ENCODE measurements at regions of chr1 and their contacts with region 1.

Region 1: DNA sequence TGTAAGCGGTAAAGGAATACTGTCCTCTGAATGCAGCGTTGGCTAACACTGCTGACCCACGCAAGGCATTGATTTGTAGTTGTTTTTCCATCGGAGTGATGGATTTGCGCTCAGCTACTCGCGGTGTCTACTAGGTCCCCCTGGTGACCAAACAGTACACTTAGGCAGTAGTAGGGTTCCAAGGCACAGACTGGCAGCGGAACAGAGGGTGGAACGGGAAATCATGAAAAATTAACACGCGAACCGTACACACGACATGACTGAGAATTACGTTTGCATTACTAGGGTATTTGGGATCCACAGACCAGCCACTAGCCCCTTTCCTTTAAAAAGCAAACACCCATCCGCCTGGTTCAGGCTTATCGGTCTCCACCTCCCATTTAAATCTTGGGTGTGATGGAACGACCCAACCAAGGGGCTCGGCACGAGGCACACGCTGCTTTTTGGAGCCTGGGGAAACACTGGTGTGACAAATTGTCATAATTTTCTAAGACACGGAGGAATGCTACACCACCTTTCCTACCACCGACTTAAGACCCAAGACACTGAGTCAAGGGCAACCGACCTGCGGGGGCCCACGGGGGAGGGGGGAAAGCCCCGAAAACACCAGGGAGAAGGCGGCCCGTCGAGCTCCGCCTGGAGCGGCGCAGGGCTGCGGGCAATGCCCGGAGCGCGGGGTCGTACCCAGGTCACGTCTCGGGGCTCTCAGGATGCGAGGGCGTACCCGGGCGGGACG is 699 bp downstream of the DIPK1A start:
- DNase-seq: peak; percentile 61 to 83
- H3K4me3 ChIP-seq: peak overlapping the region; percentile 66
- H3K27ac ChIP-seq: peak overlapping the region; percentile 65
- H3K4me1 ChIP-seq: peaks cover 22% of the 10 kb centered on the region
- H3K27me3 ChIP-seq: no peaks in the 10 kb centered on the region
- CTCF ChIP-seq: peak; percentile 81

Region 2: DNA sequence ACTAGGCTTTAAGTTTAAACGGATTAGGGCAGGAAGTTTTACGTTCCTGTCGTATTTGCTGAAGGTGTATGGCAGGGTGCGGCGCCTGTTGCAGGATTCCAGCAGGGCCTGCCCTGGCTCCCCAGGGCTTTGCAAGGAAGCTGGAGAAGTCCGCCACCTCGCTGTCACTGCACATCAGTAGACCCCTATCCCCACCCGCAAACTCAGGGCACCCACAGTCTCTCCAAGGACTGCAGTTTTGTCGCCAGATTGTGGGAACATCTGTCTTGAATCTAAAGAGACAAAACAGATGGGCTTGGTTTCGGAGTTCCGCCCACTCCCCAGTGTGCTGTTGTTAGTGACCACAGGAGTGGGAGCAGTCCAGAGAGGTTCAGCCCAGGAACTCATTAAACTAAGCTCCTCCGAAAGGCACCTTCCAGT is 1349.1 kb before region 1 on chr1:
- CTCF ChIA-PET with region 1: no interaction called
- POLR2A ChIA-PET with region 1: interaction called, 23 read pairs
- intact Hi-C with region 1: no loop called
- DNase-seq: no peak
- H3K4me3 ChIP-seq: no peak overlapping the region
- H3K27ac ChIP-seq: no peak overlapping the region
- H3K4me1 ChIP-seq: peaks cover 37% of the 10 kb centered on the region
- H3K27me3 ChIP-seq: no peaks in the 10 kb centered on the region
- CTCF ChIP-seq: no peak

Region 3: GRCh38 chr1:91781371-91781825 is 1179.2 kb before region 1 on chr1:
- CTCF ChIA-PET with region 1: no interaction called
- POLR2A ChIA-PET with region 1: no interaction called
- intact Hi-C with region 1: no loop called
- DNase-seq: no peak
- H3K4me3 ChIP-seq: no peak overlapping the region
- H3K27ac ChIP-seq: no peak overlapping the region
- H3K4me1 ChIP-seq: no peaks in the 10 kb centered on the region; the same call in 1 of the 2 replicates
- H3K27me3 ChIP-seq: no peaks in the 10 kb centered on the region
- CTCF ChIP-seq: no peak

Region 4: DNA sequence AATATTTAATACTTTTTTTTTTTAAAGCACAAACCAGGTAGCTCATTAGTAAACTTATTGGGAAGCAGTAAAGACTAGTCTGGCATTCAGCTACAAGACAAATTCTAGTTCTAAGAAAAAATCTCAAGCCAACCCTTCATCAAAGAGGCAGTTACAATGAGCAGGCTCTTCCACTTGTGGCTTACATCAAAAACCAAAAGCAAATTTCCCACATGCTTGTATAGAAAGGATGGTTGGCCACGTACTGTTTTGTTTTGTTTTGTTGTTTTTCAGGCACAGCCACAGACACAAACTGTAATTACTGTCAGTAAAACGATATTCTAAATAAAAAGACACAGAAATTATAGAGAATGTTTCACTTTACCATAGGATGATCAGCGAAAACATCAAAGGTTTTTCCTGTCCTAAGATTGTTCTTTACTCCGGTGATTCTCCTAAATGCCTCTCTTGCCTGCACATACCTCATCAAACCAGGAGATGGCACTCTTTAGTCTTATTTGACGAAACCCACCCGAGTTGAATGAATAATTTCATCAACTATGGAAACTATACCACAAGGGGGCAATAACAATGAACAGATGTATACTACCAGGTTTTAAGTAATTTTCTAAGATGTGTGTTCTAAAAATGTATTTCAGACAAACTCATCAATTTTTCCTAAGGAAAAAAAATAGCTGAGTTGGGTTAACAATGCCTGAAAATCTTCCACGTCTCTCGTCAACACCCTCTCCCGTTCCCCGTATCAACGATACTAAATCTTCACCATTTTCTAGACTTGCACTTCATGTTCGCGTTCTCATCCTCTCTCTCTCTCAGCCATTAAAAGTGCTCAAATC is 101.8 kb before region 1 on chr1:
- CTCF ChIA-PET with region 1: interaction called, 7 read pairs
- POLR2A ChIA-PET with region 1: no interaction called
- intact Hi-C with region 1: loop called (anchors 1 kb)
- DNase-seq: peak; percentile 45 to 82
- H3K4me3 ChIP-seq: no peak overlapping the region
- H3K27ac ChIP-seq: no peak overlapping the region
- H3K4me1 ChIP-seq: no peaks in the 10 kb centered on the region
- H3K27me3 ChIP-seq: no peaks in the 10 kb centered on the region
- CTCF ChIP-seq: peak; percentile 100

Region 5: GRCh38 chr1:92901699-92902405 is 58.7 kb before region 1 on chr1:
- CTCF ChIA-PET with region 1: no interaction called
- POLR2A ChIA-PET with region 1: no interaction called
- intact Hi-C with region 1: no loop called
- DNase-seq: no peak
- H3K4me3 ChIP-seq: no peak overlapping the region
- H3K27ac ChIP-seq: no peak overlapping the region
- H3K4me1 ChIP-seq: no peaks in the 10 kb centered on the region
- H3K27me3 ChIP-seq: no peaks in the 10 kb centered on the region
- CTCF ChIP-seq: no peak

Region 6: DNA sequence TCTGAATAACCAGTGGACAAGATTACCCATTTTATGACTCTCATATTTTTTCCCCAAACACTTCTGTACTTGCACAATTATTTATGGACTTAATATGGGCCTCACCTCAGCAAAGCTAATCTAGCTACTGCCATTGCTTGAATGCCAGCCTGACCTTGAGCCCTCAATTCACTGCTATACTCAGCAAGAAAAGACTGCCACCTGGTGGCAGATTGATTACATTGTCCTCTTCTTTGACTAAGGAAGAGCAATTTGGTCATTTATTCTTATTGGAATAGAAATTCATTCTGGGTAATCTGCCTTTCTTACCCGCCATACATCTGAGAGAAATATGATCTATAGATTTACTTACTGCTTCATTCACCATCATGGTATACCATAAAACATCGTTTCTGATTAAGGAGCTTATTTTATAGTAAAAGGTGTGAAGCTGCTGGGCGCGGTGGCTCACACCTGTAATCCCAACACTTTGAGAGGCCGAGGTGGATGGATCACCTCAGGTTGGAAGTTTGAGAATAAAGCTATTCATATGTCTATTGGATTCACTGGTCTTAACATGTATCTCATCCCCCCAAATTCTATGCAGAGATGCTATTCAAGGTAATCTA is 33.6 kb after region 1 on chr1:
- CTCF ChIA-PET with region 1: interaction called, 3 read pairs
- POLR2A ChIA-PET with region 1: interaction called, 12 read pairs
- intact Hi-C with region 1: loop called (anchors 1 kb)
- DNase-seq: peak; percentile 33 to 79
- H3K4me3 ChIP-seq: no peak overlapping the region
- H3K27ac ChIP-seq: no peak overlapping the region
- H3K4me1 ChIP-seq: peaks cover 66% of the 10 kb centered on the region
- H3K27me3 ChIP-seq: no peaks in the 10 kb centered on the region
- CTCF ChIP-seq: peak; percentile 98

Region 7: DNA sequence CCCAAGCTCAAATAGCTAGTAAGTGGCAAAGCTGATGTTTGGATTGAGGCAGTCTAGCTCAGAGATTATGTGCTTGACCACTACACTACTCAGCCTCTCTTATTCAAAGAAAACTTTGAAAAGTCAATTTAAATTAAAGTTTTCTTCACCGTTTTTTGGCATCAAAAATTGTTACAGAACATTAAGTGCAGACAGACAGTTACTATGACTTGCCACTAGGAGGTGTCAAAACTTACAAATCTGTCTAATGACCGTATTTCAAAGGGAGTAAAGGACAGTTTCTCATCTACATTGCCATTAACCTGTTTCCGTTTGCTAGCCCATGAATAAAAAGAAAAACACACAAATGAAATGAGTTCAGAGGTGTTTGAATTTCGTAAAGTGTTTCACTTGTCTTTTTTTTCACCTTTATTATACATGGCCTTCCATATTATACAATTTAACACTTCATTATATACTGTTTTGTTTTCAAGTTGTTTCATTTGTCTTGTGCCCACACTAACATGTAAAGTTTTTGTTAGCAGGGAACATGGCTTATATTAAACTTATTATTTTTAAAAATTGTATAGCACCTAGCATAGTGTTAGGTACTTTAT is 61.1 kb after region 1 on chr1:
- CTCF ChIA-PET with region 1: no interaction called
- POLR2A ChIA-PET with region 1: no interaction called
- intact Hi-C with region 1: no loop called
- DNase-seq: peak in 1 of 2 experiments; percentile 56
- H3K4me3 ChIP-seq: no peak overlapping the region
- H3K27ac ChIP-seq: no peak overlapping the region
- H3K4me1 ChIP-seq: peaks cover 13% of the 10 kb centered on the region
- H3K27me3 ChIP-seq: no peaks in the 10 kb centered on the region
- CTCF ChIP-seq: peak; percentile 97

Region 8: DNA sequence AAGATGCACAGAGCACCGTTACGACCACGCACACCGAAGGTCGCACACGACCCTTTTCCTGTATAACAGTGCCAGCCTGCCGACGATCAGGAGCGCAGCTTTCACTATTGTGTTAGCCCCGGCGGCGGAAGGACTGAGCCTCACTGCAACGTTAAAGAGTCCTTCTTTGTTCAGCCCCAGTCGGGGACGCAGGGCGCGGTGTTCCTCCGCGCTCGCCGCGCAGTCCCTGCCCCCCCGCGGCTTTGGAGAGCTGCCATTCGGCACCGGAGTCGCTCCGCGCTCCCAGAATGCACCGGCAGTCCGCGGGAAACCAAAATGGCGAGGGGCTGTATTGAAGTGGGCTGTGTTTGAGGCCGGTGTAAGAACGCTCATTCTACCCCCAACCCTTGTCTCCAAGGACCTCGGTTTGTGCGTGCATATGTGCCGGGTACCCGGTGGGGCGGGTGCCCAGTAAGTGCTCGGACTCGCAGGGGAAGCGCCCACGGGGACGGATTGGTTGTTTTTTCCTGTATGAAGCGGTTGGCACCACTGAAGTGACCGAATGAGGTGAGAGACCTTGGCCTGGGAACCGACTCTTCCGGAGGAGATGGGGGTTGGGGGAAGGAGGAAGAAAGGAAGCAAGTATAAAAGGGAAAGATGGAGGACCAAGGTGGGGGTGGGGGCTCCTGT is 118.6 kb after region 1 on chr1 and contains the start of gene MTF2:
- CTCF ChIA-PET with region 1: no interaction called
- POLR2A ChIA-PET with region 1: interaction called, 22 read pairs
- intact Hi-C with region 1: no loop called
- DNase-seq: peak; percentile 91 to 95
- H3K4me3 ChIP-seq: peak within 1 kb of the TSS; percentile 87
- H3K27ac ChIP-seq: peak within 1 kb of the TSS; percentile 58
- H3K4me1 ChIP-seq: peaks cover 25% of the 10 kb centered on the region
- H3K27me3 ChIP-seq: no peaks in the 10 kb centered on the region
- CTCF ChIP-seq: no peak
- total RNA-seq, gene MTF2: 31.7 and 38.6 TPM in 2 replicates